ENCODE measurements at regions of chr11 and their contacts with region 1.

Region 1: GRCh38 chr11:118956094-118956846 is at the start of gene UPK2:
- DNase-seq: peak; percentile 81
- ATAC-seq: peak; percentile 99
- H3K4me3 Mint-ChIP-seq: no peak within 1 kb of the TSS
- H3K27ac Mint-ChIP-seq: no peak within 1 kb of the TSS
- H3K4me1 Mint-ChIP-seq: peaks cover 3% of the 10 kb centered on the region
- H3K27me3 Mint-ChIP-seq: peaks cover 26% of the 10 kb centered on the region
- CTCF ChIP-seq: peak; percentile 62
- total RNA-seq, gene UPK2: 0.27 TPM in 1 of 2 replicates, not detected in the other

Region 2: GRCh38 chr11:118462178-118462577 is 494.1 kb before region 1 on chr11:
- CTCF ChIA-PET with region 1: no interaction called
- POLR2A ChIA-PET with region 1: no interaction called
- intact Hi-C with region 1: no loop called
- DNase-seq: no peak
- ATAC-seq: no peak
- H3K4me3 Mint-ChIP-seq: no peak overlapping the region
- H3K27ac Mint-ChIP-seq: no peak overlapping the region
- H3K4me1 Mint-ChIP-seq: peaks cover 20% of the 10 kb centered on the region
- H3K27me3 Mint-ChIP-seq: no peaks in the 10 kb centered on the region
- CTCF ChIP-seq: no peak

Region 3: DNA sequence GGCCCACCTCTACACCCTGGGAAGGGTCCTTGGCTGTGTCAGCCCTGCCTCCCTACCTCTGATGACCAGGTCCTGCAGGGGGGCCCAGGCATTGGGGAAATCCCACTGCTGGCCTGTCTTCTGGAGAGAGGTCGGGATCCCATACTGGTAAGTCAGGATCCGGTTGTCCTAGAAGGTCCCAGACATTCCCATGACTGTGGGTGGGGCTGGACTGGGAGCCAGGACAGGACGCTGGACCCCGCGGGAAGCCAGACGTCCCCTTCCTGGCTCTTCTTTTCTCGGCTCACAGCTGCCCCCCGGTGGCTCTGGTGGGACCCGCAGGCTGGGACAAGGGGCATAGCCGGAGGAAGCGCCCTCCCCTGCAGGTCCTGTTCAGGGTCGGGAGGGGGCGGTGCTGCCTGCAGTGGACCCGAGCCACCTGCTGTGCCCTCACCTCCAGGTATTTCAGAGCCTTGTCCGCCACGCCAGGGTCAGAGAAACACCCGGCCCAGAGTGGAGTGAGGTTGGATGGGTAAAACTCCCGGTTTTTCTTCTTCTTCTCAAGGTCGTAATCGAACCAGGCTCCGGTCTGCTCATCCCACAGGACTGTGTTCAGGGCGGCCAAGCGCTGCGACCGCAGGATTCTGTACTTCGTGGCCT is 296.8 kb before region 1 on chr11:
- CTCF ChIA-PET with region 1: interaction called, 4 read pairs
- POLR2A ChIA-PET with region 1: no interaction called
- intact Hi-C with region 1: loop called (anchors 1 kb)
- DNase-seq: peak; percentile 80
- ATAC-seq: peak; percentile 100
- H3K4me3 Mint-ChIP-seq: no peak overlapping the region
- H3K27ac Mint-ChIP-seq: no peak overlapping the region
- H3K4me1 Mint-ChIP-seq: peaks cover 7% of the 10 kb centered on the region
- H3K27me3 Mint-ChIP-seq: peaks cover 6% of the 10 kb centered on the region
- CTCF ChIP-seq: peak; percentile 50

Region 4: GRCh38 chr11:118907051-118908042 is 48.9 kb before region 1 on chr11:
- CTCF ChIA-PET with region 1: interaction called, 16 read pairs
- POLR2A ChIA-PET with region 1: interaction called, 3 read pairs
- intact Hi-C with region 1: loop called (anchors 1 kb)
- DNase-seq: peak; percentile 77
- ATAC-seq: peak; percentile 85
- H3K4me3 Mint-ChIP-seq: no peak overlapping the region
- H3K27ac Mint-ChIP-seq: peak overlapping the region; percentile 53
- H3K4me1 Mint-ChIP-seq: peaks cover 39% of the 10 kb centered on the region
- H3K27me3 Mint-ChIP-seq: no peaks in the 10 kb centered on the region
- CTCF ChIP-seq: peak; percentile 64

Region 5: DNA sequence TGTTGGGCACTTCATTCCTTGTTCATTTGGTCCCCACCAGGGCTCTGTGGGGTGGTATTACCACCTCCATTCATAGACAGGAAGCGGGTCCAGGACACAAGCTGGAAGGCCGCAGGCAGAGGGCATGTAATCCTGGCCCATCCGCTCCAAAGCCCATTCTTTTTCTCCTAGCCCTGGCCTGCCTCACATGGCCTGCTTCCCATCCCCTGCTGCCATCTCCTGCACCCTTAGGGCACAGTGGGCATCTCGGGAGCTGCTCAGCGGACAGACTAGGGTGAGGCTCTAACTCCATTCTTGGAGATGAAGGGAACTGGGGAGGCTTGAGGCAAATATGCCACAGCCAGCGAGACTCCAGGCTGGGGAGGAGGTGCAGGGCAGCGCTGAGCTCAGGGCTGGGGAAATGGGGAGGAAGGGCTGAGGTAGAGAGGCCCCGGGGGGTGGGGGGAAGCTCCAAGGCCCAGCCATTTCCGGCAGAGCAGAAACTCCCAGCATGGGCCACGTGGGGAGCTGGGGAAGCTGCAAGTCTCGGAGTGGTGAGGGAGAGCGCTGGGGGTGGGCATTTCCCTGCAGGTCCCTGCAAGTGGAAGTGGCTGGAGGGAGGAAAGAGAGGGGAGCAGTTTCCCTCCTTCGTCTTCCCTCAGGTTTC is 16.2 kb before region 1 on chr11:
- CTCF ChIA-PET with region 1: interaction called, 3 read pairs
- POLR2A ChIA-PET with region 1: interaction called, 11 read pairs
- intact Hi-C with region 1: no loop called
- DNase-seq: no peak
- ATAC-seq: peak; percentile 58
- H3K4me3 Mint-ChIP-seq: no peak overlapping the region
- H3K27ac Mint-ChIP-seq: no peak overlapping the region
- H3K4me1 Mint-ChIP-seq: peaks cover 22% of the 10 kb centered on the region
- H3K27me3 Mint-ChIP-seq: peaks cover 3% of the 10 kb centered on the region
- CTCF ChIP-seq: no peak

Region 6: DNA sequence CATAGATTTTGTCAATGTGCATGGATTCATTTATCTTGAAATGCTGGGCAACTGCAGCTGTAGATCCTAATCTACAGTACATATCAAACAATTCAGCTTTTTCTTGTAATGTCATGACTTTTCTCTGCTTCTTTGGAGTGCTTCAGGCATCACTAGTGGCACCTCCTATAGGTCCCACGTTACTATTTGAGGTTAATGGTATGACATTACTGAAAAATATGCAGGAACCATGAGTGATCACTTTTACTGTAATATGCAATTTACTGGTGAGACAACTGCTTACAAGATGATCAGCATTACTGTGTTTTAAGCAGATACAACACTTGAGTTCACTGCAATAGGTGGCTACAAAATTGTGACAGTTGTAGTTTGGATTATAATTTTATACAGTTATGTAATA is 44.6 kb after region 1 on chr11:
- CTCF ChIA-PET with region 1: no interaction called
- POLR2A ChIA-PET with region 1: no interaction called
- intact Hi-C with region 1: no loop called
- DNase-seq: no peak
- ATAC-seq: no peak
- H3K4me3 Mint-ChIP-seq: peak overlapping the region; percentile 24
- H3K27ac Mint-ChIP-seq: no peak overlapping the region
- H3K4me1 Mint-ChIP-seq: peaks cover 32% of the 10 kb centered on the region
- H3K27me3 Mint-ChIP-seq: no peaks in the 10 kb centered on the region
- CTCF ChIP-seq: no peak

Measured in activated B cell treated with CpG ODN at 0.5 μM for 24 hours (primary cell).